ENCODE measurements at regions of chr21 and their contacts with region 1.

Region 1: DNA sequence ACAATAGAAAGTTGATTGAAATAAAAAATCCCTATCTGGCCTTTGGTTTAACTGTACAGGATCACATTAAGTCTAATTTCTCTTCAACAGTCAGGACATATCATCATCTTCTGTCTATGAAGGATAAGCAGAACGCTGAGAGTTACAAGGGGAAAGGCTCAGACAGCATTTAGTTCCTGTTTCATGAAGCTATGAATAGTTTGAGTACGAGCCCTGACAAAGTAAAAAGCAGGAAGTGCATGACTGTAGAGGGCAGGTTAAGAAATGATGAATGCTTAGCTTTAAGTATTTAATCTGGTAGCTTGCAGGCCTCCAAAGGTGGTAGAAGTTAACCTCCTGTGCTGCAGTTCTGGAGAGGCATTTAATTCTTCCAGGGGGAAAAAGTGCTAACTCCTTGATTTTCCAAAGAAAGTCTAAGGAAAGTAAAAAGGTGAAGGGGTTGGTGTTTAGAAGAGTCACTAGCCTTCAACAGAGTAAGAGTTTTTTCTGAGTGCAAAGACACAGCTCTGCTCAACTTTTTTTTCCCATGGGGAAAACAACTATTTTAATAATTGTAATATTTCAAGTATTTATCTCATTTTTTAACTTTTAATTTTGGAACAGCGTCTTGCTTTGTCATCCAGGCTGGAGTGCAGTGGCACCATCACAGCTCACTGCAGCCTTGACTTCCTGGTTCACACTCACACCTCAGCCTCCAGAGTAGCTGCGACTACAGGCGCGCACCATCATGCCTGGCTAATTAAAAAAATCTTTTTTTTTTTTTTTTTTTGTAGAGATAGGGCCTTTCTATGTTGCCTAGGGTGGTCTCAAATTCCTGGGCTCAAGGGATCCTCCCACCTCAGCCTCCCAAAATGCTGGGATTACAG is 202.8 kb downstream of the APP start:
- DNase-seq: peak; percentile 88
- H3K4me3 ChIP-seq: no peak overlapping the region
- H3K27ac ChIP-seq: peak overlapping the region; percentile 67
- H3K4me1 ChIP-seq: peaks cover 45% of the 10 kb centered on the region
- H3K27me3 ChIP-seq: no peaks in the 10 kb centered on the region
- CTCF ChIP-seq: no peak
- POLR2A ChIP-seq: no peak

Region 2: DNA sequence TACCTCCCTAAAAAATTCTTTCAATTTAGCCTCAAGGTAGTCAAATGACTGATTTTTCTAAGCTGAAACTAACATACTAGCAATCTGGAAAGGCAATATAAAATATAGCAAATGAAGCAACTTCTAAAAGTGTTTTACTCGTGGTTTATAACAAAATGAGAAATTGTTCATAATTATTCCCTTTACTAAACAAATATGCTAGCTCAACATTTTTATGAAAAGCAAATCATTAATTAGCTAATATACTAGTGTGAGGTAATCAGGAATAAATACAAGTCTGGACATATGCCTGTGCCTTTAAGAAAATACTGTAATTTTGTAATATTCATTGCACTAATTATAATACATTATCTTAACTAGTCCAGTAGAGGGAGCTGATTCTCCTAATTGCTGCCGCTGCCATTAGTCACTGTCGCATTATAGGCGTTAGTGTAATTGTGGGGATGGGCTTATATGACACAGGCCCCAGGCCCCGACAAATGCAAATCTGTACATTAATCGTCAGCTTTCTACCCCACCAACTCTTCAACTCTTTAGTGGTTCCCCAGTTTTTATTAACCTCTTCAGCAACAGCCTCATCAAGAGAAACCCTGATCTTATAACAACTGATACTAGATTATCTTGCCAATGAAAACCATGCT is 72.1 kb before region 1 on chr21:
- CTCF ChIA-PET with region 1: interaction called, 22 read pairs
- POLR2A ChIA-PET with region 1: no interaction called
- dilution Hi-C with region 1: no loop called
- intact Hi-C with region 1: loop called (anchors 1 kb)
- DNase-seq: peak; percentile 70
- H3K4me3 ChIP-seq: no peak overlapping the region
- H3K27ac ChIP-seq: peak overlapping the region; percentile 59
- H3K4me1 ChIP-seq: peaks cover 37% of the 10 kb centered on the region
- H3K27me3 ChIP-seq: no peaks in the 10 kb centered on the region
- CTCF ChIP-seq: peak; percentile 39 to 41
- POLR2A ChIP-seq: no peak

Region 3: DNA sequence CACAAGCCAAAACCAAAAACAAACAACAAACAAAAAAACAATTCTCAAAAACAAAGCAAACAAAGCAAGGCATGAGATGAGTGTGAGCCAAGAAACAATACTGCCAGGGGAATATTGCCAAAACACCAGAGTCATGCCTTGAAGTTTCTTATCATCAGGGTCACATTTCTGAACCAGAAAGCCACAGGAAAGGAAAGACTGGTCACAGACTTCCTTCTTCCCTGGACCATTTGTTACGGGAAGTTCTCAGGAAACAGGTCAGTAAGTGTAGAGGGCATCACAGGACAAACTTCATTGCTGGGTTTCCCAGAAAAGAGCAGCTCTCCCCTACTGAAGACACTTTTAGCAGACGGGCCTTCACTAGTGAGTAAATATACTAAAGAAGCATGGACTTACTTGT is 41.9 kb before region 1 on chr21:
- CTCF ChIA-PET with region 1: no interaction called
- POLR2A ChIA-PET with region 1: no interaction called
- dilution Hi-C with region 1: no loop called
- intact Hi-C with region 1: loop called (anchors 2 kb)
- DNase-seq: peak; percentile 97
- H3K4me3 ChIP-seq: no peak overlapping the region
- H3K27ac ChIP-seq: peak overlapping the region; percentile 97
- H3K4me1 ChIP-seq: peaks cover 46% of the 10 kb centered on the region
- H3K27me3 ChIP-seq: no peaks in the 10 kb centered on the region
- CTCF ChIP-seq: no peak
- POLR2A ChIP-seq: peak; percentile 79

Region 4: GRCh38 chr21:25934771-25935224 is 33.0 kb before region 1 on chr21:
- CTCF ChIA-PET with region 1: interaction called, 5 read pairs
- POLR2A ChIA-PET with region 1: interaction called, 5 read pairs
- dilution Hi-C with region 1: no loop called
- intact Hi-C with region 1: loop called (anchors 1 kb)
- DNase-seq: peak; percentile 97
- H3K4me3 ChIP-seq: no peak overlapping the region
- H3K27ac ChIP-seq: peak overlapping the region; percentile 90
- H3K4me1 ChIP-seq: peaks cover 93% of the 10 kb centered on the region
- H3K27me3 ChIP-seq: no peaks in the 10 kb centered on the region
- CTCF ChIP-seq: no peak
- POLR2A ChIP-seq: no peak

Region 5: GRCh38 chr21:25953659-25954058 is 14.1 kb before region 1 on chr21:
- CTCF ChIA-PET with region 1: interaction called, 10 read pairs
- POLR2A ChIA-PET with region 1: no interaction called
- dilution Hi-C with region 1: no loop called
- intact Hi-C with region 1: loop called (anchors 1 kb)
- DNase-seq: peak; percentile 87
- H3K4me3 ChIP-seq: no peak overlapping the region
- H3K27ac ChIP-seq: peak overlapping the region; percentile 88
- H3K4me1 ChIP-seq: peaks cover 55% of the 10 kb centered on the region
- H3K27me3 ChIP-seq: no peaks in the 10 kb centered on the region
- CTCF ChIP-seq: no peak
- POLR2A ChIP-seq: peak; percentile 52

Region 6: DNA sequence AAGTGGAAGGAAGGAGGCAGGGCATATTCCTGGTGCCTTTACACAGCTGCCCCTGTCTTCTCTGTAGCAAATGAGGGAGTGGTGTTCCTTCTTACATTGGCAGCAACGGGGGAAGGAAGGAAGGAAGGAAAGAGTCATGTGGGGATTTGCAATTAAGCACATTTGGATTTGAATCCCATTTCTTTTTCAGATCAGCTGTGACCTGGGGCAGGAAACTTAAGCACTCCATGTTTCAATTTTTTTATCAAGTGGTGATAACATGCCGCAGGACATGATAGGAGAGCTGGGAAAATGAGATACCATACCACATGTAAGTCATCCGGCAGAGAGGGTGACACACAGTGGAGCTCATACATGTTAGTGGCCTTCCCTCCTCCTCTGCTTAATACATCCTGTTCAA is 15.9 kb after region 1 on chr21:
- CTCF ChIA-PET with region 1: interaction called, 12 read pairs
- POLR2A ChIA-PET with region 1: no interaction called
- dilution Hi-C with region 1: no loop called
- intact Hi-C with region 1: loop called (anchors 1 kb)
- DNase-seq: peak; percentile 84
- H3K4me3 ChIP-seq: no peak overlapping the region
- H3K27ac ChIP-seq: peak overlapping the region; percentile 62
- H3K4me1 ChIP-seq: peaks cover 65% of the 10 kb centered on the region
- H3K27me3 ChIP-seq: no peaks in the 10 kb centered on the region
- CTCF ChIP-seq: no peak
- POLR2A ChIP-seq: peak; percentile 11

Region 7: DNA sequence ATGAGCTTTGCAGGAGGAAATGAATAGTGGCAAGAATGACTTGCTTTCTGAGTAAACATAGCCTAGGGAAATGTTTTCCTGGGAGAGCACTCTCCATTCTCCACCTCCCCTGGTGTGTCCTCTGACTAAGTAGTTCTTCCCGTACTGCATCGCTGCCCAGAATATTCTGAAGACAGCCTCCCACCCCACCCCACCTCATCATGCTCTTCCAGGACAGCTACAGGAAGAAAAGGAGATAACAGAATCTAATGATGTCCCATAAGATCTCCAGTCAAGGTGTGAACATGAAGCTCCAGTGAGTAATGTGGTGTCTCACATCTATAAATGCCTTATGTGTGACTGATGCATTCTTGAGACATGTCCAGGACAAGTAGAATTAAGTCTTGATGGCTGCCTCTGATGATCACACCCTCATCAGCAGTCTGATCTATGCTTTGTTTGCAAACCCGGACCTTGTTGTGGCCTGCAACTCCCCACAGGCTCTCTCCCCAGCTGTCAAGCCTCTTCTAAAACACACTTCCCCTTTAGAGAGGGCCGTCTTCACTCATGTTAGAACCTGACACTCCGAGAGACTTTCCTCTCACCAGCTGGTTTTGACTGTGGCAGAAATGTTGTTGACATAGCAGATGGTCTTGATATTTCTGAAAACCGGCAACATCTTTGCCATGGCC is 422.3 kb after region 1 on chr21:
- CTCF ChIA-PET with region 1: no interaction called
- POLR2A ChIA-PET with region 1: no interaction called
- dilution Hi-C with region 1: no loop called
- intact Hi-C with region 1: loop called (anchors 1 kb)
- DNase-seq: peak; percentile 38
- H3K4me3 ChIP-seq: no peak overlapping the region
- H3K27ac ChIP-seq: peak overlapping the region; percentile 70
- H3K4me1 ChIP-seq: peaks cover 18% of the 10 kb centered on the region
- H3K27me3 ChIP-seq: no peaks in the 10 kb centered on the region
- CTCF ChIP-seq: no peak
- POLR2A ChIP-seq: no peak

Measured in endothelial cell of umbilical vein (primary cell).